Mammary epithelial cell (primary cell): ENCODE measurements at regions of chr4 and their contacts with region 1.

Region 1: GRCh38 chr4:10018818-10019461 is 2.4 kb downstream of the SLC2A9 start:
- DNase-seq: peak; percentile 94
- H3K4me3 ChIP-seq: peak overlapping the region; percentile 49 to 88 (median 50)
- H3K27ac ChIP-seq: peak overlapping the region; percentile 72
- H3K4me1 ChIP-seq: peaks cover 41% of the 10 kb centered on the region
- H3K27me3 ChIP-seq: no peaks in the 10 kb centered on the region
- CTCF ChIP-seq: peak; percentile 88 to 98

Region 2: GRCh38 chr4:9924750-9925149 is 94.2 kb before region 1 on chr4:
- CTCF ChIA-PET with region 1: no interaction called
- dilution Hi-C with region 1: no loop called
- in situ Hi-C with region 1: no loop called
- intact Hi-C with region 1: loop called (anchors 2 kb)
- DNase-seq: peak; percentile 91
- H3K4me3 ChIP-seq: no peak overlapping the region
- H3K27ac ChIP-seq: no peak overlapping the region
- H3K4me1 ChIP-seq: peaks cover 26% of the 10 kb centered on the region
- H3K27me3 ChIP-seq: no peaks in the 10 kb centered on the region
- CTCF ChIP-seq: no peak

Region 3: GRCh38 chr4:10032625-10033024 is 13.7 kb after region 1 on chr4:
- CTCF ChIA-PET with region 1: no interaction called
- dilution Hi-C with region 1: no loop called
- in situ Hi-C with region 1: no loop called
- intact Hi-C with region 1: loop called (anchors 1 kb)
- DNase-seq: peak; percentile 92
- H3K4me3 ChIP-seq: no peak overlapping the region
- H3K27ac ChIP-seq: no peak overlapping the region
- H3K4me1 ChIP-seq: peaks cover 39% of the 10 kb centered on the region
- H3K27me3 ChIP-seq: no peaks in the 10 kb centered on the region
- CTCF ChIP-seq: no peak

Region 4: GRCh38 chr4:10063544-10064300 is 44.8 kb after region 1 on chr4:
- CTCF ChIA-PET with region 1: interaction called, 24 read pairs
- dilution Hi-C with region 1: no loop called
- in situ Hi-C with region 1: loop called in 1 of 2 experiments (anchors 5 kb)
- intact Hi-C with region 1: loop called (anchors 1 kb)
- DNase-seq: peak; percentile 70
- H3K4me3 ChIP-seq: no peak overlapping the region
- H3K27ac ChIP-seq: no peak overlapping the region
- H3K4me1 ChIP-seq: peaks cover 9% of the 10 kb centered on the region
- H3K27me3 ChIP-seq: no peaks in the 10 kb centered on the region
- CTCF ChIP-seq: peak; percentile 95

Region 5: DNA sequence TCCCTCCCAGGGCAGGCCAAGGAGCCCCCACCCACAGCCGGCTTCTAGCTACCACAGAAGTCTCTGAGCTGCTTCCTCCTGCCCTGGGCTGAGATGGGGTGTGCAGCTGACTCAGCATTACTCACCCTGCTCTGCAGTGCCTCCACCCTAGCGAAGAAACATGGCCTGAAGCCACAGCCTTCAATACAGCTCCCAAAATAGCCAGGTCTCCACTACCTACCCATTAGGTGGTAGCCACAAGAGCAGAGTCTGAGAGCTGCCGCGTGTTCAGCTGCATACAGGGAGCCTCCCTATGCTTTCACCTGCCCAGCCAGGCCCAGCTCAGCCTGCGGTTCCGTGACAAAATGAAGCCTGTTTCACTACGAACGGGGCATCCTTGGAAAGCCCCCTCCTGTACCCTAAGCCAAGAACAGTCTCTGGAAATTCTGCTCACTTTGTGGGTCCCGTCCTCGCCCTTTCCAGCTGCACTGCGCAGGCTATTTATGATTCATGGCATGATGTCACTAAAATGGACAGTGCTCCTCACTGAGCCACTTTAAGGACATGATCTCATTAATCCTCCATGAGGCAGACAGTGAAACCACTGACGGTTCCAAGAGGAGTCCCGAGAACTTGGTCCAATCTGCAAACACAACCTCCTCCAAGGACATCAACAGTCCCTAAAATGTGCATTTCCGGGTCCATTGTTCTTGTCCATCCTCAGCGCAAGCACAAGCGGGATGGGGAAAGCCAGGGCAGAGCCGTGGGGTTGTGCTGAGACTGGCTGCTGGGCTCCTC is 77.4 kb after region 1 on chr4:
- CTCF ChIA-PET with region 1: interaction called, 4 read pairs
- dilution Hi-C with region 1: no loop called
- in situ Hi-C with region 1: no loop called
- intact Hi-C with region 1: loop called (anchors 2 kb)
- DNase-seq: peak; percentile 97
- H3K4me3 ChIP-seq: no peak overlapping the region
- H3K27ac ChIP-seq: peak overlapping the region; percentile 86
- H3K4me1 ChIP-seq: peaks cover 84% of the 10 kb centered on the region
- H3K27me3 ChIP-seq: no peaks in the 10 kb centered on the region
- CTCF ChIP-seq: no peak